Heart right ventricle (tissue), 16 donors: ENCODE measurements at regions of chr19 and their contacts with region 1.

Region 1: GRCh38 chr19:4457654-4458395 is at the start of gene UBXN6:
- DNase-seq: peak; percentile 97 to 98
- ATAC-seq: peak; percentile 88 to 94 (median 91)
- H3K4me3 ChIP-seq: peak within 1 kb of the TSS; percentile 51 to 88 (median 76)
- H3K27ac ChIP-seq: peak within 1 kb of the TSS; percentile 66 to 96 (median 91)
- H3K4me1 ChIP-seq: peaks cover 7 to 43% (median 25%) of the 10 kb centered on the region in 9 donors
- H3K27me3 ChIP-seq: no peaks in the 10 kb centered on the region
- CTCF ChIP-seq: peak in 1 of 9 donors; percentile 8
- total RNA-seq, gene UBXN6: 90.6 to 123 (median 104) TPM

Region 2: GRCh38 chr19:4471403-4472173 is 13.8 kb after region 1 on chr19:
- intact Hi-C with region 1: loop called in 1 of 10 experiments (anchors 1 kb)
- DNase-seq: peak; percentile 96 to 99
- ATAC-seq: peak; percentile 95 to 97 (median 96)
- H3K4me3 ChIP-seq: peak overlapping the region; percentile 23 to 100 (median 94)
- H3K27ac ChIP-seq: peak overlapping the region; percentile 11 to 93 (median 87)
- H3K4me1 ChIP-seq: peaks cover 8 to 31% (median 25%) of the 10 kb centered on the region in 9 donors
- H3K27me3 ChIP-seq: no peaks in the 10 kb centered on the region
- CTCF ChIP-seq: no peak

Region 3: GRCh38 chr19:4576016-4576933 is 118.5 kb after region 1 on chr19:
- intact Hi-C with region 1: no loop called
- DNase-seq: peak; percentile 67 to 80
- ATAC-seq: peak; percentile 39 to 73 (median 56)
- H3K4me3 ChIP-seq: no peak overlapping the region
- H3K27ac ChIP-seq: peak overlapping the region; percentile 51 to 90 (median 84)
- H3K4me1 ChIP-seq: peaks cover 0 to 42% (median 26%) of the 10 kb centered on the region in 9 donors
- H3K27me3 ChIP-seq: peaks cover 5 to 68% (median 41%) of the 10 kb centered on the region in 7 donors
- CTCF ChIP-seq: peak; percentile 27 to 76 (median 70)